Caco-2 (cell line): ENCODE measurements at regions of chr2 and their contacts with region 1.

Region 1: DNA sequence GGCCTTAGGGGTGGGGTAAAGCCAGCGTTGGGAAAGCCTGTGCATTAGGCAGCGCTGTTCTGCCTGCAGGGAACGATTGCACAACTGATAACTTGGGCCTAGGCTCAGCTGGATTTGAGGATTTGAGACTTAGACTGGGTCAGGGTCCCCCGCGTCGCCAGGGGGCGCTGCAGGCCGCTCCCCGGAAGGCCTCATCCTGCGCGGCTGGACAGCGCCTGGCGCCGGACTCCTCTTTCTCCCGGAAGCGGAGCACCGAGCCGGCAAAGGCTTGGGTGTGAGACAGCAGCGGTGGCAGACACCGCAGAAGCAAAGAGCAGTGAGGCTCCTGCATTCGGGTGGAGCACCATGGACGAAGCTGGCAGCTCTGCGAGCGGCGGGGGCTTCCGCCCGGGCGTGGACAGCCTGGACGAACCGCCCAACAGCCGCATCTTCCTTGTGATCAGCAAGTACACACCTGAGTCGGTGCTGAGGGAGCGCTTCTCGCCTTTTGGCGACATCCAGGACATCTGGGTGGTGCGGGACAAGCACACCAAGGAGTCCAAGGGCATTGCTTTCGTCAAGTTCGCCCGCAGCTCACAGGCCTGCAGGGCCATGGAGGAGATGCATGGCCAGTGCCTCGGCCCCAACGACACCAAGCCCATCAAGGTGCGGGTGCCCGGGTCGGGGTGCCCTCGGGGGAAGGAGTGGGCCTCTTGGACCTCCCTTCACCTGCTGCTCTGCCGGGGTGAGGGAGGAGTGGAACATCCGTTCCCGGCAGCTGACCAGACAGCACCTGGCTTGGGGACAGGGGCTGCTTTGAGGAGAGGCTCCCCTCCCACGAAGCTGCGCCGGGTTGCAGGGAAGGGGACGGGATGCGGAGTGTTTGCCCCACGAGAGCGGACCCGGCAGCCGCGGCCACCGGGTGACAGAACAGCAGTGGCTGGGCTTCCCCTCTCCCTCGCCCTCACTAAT is at the start of gene RBM45:
- DNase-seq: peak; percentile 92 to 95
- H3K4me3 ChIP-seq: peak within 1 kb of the TSS; percentile 98
- H3K4me3 Mint-ChIP-seq: peak within 1 kb of the TSS; percentile 94
- H3K27ac Mint-ChIP-seq: peak within 1 kb of the TSS; percentile 80
- H3K4me1 ChIP-seq: 0 out of 2 replicates have a peak, but pooled peaks cover 6% of the 10 kb centered on the region
- H3K4me1 Mint-ChIP-seq: peaks cover 6% of the 10 kb centered on the region
- H3K27me3 ChIP-seq: no peaks in the 10 kb centered on the region
- H3K27me3 Mint-ChIP-seq: no peaks in the 10 kb centered on the region
- CTCF ChIP-seq: peak; percentile 96 to 99
- total RNA-seq, gene RBM45: 13.4 and 13.6 TPM in 2 replicates

Region 2: DNA sequence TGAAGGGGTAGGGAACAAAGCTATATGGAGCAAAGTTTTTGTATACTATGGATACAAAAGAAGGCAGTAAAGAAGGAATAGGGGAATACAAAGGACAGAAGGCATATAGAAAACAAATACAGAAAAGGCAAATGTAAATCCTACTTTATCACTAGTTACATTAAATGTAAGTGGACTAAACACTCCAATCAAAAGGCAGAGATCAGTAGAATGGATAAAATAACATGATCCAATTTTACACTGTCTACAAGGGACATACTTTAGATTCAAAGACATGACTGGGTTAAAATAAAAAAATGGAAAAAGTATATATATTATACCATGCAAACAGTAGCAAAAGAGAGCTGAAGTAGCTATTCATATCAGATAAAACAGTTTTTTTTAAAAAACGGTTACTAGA is 254.9 kb before region 1 on chr2:
- CTCF ChIA-PET with region 1: no interaction called
- POLR2A ChIA-PET with region 1: no interaction called
- intact Hi-C with region 1: no loop called
- DNase-seq: no peak
- H3K4me3 ChIP-seq: no peak overlapping the region
- H3K4me3 Mint-ChIP-seq: no peak overlapping the region
- H3K27ac Mint-ChIP-seq: no peak overlapping the region
- H3K4me1 ChIP-seq: no peaks in the 10 kb centered on the region
- H3K4me1 Mint-ChIP-seq: peaks cover 2% of the 10 kb centered on the region
- H3K27me3 ChIP-seq: no peaks in the 10 kb centered on the region
- H3K27me3 Mint-ChIP-seq: no peaks in the 10 kb centered on the region
- CTCF ChIP-seq: no peak

Region 3: GRCh38 chr2:177983183-177983788 is 129.2 kb before region 1 on chr2:
- CTCF ChIA-PET with region 1: no interaction called
- POLR2A ChIA-PET with region 1: no interaction called
- intact Hi-C with region 1: loop called (anchors 5 kb)
- DNase-seq: peak; percentile 35 to 48
- H3K4me3 ChIP-seq: no peak overlapping the region
- H3K4me3 Mint-ChIP-seq: no peak overlapping the region
- H3K27ac Mint-ChIP-seq: no peak overlapping the region
- H3K4me1 ChIP-seq: no peaks in the 10 kb centered on the region
- H3K4me1 Mint-ChIP-seq: no peaks in the 10 kb centered on the region
- H3K27me3 ChIP-seq: no peaks in the 10 kb centered on the region; the same call in 1 of the 2 replicates
- H3K27me3 Mint-ChIP-seq: peaks cover 6% of the 10 kb centered on the region
- CTCF ChIP-seq: peak; percentile 79 to 86

Region 4: GRCh38 chr2:178072383-178073301 is 39.8 kb before region 1 on chr2 and contains the start of gene PDE11A:
- CTCF ChIA-PET with region 1: interaction called, 4 read pairs
- POLR2A ChIA-PET with region 1: no interaction called
- intact Hi-C with region 1: loop called (anchors 1 kb)
- DNase-seq: peak; percentile 89 to 94
- H3K4me3 ChIP-seq: peak within 1 kb of the TSS; percentile 48
- H3K4me3 Mint-ChIP-seq: peak within 1 kb of the TSS; percentile 87
- H3K27ac Mint-ChIP-seq: peak within 1 kb of the TSS; percentile 60
- H3K4me1 ChIP-seq: peaks cover 7% of the 10 kb centered on the region; the same call in 1 of the 2 replicates
- H3K4me1 Mint-ChIP-seq: peaks cover 23% of the 10 kb centered on the region
- H3K27me3 ChIP-seq: no peaks in the 10 kb centered on the region
- H3K27me3 Mint-ChIP-seq: peaks cover 16% of the 10 kb centered on the region
- CTCF ChIP-seq: no peak
- total RNA-seq, gene PDE11A: 0.21 and 0.25 TPM in 2 replicates

Region 5: GRCh38 chr2:178128836-178129630 is 16.6 kb after region 1 on chr2:
- CTCF ChIA-PET with region 1: no interaction called
- POLR2A ChIA-PET with region 1: no interaction called
- intact Hi-C with region 1: no loop called
- DNase-seq: no peak
- H3K4me3 ChIP-seq: no peak overlapping the region
- H3K4me3 Mint-ChIP-seq: no peak overlapping the region
- H3K27ac Mint-ChIP-seq: no peak overlapping the region
- H3K4me1 ChIP-seq: 0 out of 2 replicates have a peak, but pooled peaks cover 5% of the 10 kb centered on the region
- H3K4me1 Mint-ChIP-seq: peaks cover 9% of the 10 kb centered on the region
- H3K27me3 ChIP-seq: no peaks in the 10 kb centered on the region
- H3K27me3 Mint-ChIP-seq: no peaks in the 10 kb centered on the region
- CTCF ChIP-seq: no peak

Region 6: GRCh38 chr2:178193823-178194599 is 81.5 kb after region 1 on chr2 and contains the start of gene OSBPL6:
- CTCF ChIA-PET with region 1: interaction called, 6 read pairs
- POLR2A ChIA-PET with region 1: no interaction called
- intact Hi-C with region 1: loop called (anchors 5 kb)
- DNase-seq: peak; percentile 66 to 85
- H3K4me3 ChIP-seq: peak within 1 kb of the TSS; percentile 70
- H3K4me3 Mint-ChIP-seq: peak within 1 kb of the TSS; percentile 76
- H3K27ac Mint-ChIP-seq: no peak within 1 kb of the TSS
- H3K4me1 ChIP-seq: peaks cover 10% of the 10 kb centered on the region; the same call in 1 of the 2 replicates
- H3K4me1 Mint-ChIP-seq: no peaks in the 10 kb centered on the region
- H3K27me3 ChIP-seq: peaks cover 6% of the 10 kb centered on the region
- H3K27me3 Mint-ChIP-seq: peaks cover 22% of the 10 kb centered on the region
- CTCF ChIP-seq: no peak
- total RNA-seq, gene OSBPL6: 1.0 and 1.5 TPM in 2 replicates

Region 7: DNA sequence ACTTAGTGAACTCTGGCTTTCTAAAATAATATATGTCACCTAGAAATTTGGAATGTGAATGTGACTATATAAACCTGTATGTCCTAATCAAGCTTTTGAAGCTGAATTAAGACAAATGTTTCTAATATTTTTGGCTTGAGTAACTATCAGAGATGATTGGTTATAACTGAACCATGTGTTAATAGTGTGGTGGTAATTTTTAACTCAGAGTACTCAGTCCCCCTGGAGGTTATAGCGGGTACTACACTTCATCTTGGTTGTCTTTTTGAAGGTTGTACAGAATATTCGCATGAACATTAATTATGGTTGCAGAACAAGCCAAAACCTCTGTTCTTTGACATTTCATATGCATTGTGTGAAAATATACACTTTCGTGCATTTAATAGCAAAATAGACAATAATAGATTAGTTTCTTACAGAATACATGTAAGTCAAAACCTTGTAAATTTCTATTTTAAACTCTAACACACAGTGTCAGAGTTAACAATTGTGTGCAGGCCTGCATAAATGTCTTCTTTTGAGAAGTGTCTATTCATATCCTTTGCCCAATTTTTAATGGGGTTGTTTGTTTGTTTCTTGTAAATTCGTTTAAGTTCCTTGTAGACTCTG is 167.9 kb after region 1 on chr2:
- CTCF ChIA-PET with region 1: no interaction called
- POLR2A ChIA-PET with region 1: no interaction called
- intact Hi-C with region 1: no loop called
- DNase-seq: peak in 1 of 2 experiments; percentile 51
- H3K4me3 ChIP-seq: no peak overlapping the region
- H3K4me3 Mint-ChIP-seq: no peak overlapping the region
- H3K27ac Mint-ChIP-seq: no peak overlapping the region
- H3K4me1 ChIP-seq: peaks cover 40% of the 10 kb centered on the region
- H3K4me1 Mint-ChIP-seq: peaks cover 22% of the 10 kb centered on the region
- H3K27me3 ChIP-seq: no peaks in the 10 kb centered on the region
- H3K27me3 Mint-ChIP-seq: no peaks in the 10 kb centered on the region
- CTCF ChIP-seq: peak; percentile 46 to 56

Region 8: DNA sequence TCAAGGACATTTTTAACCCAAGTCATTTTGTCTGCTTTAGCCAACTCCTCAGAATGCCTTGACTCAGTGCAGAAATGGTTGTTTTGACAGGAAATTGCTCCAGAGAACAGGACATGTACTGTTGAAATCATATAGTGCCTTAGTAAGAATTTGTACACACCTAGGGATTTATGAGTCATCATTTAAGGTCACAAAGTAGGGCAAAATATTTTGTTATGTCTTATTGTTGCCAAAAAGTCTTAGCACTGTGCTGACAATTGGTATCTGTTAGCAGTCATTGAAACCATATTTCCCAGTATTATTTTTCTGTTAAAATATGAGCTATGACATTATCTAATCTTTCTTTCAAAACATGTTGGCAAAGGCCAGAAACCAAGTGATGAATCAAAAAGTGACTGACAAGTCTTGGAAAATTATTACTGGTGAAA is 186.3 kb after region 1 on chr2:
- CTCF ChIA-PET with region 1: no interaction called
- POLR2A ChIA-PET with region 1: no interaction called
- intact Hi-C with region 1: loop called (anchors 10 kb)
- DNase-seq: no peak
- H3K4me3 ChIP-seq: no peak overlapping the region
- H3K4me3 Mint-ChIP-seq: no peak overlapping the region
- H3K27ac Mint-ChIP-seq: no peak overlapping the region
- H3K4me1 ChIP-seq: peaks cover 32% of the 10 kb centered on the region
- H3K4me1 Mint-ChIP-seq: peaks cover 24% of the 10 kb centered on the region
- H3K27me3 ChIP-seq: no peaks in the 10 kb centered on the region
- H3K27me3 Mint-ChIP-seq: no peaks in the 10 kb centered on the region
- CTCF ChIP-seq: no peak

Region 9: GRCh38 chr2:178469219-178469849 is 356.9 kb after region 1 on chr2:
- CTCF ChIA-PET with region 1: no interaction called
- POLR2A ChIA-PET with region 1: no interaction called
- intact Hi-C with region 1: no loop called
- DNase-seq: no peak
- H3K4me3 ChIP-seq: no peak overlapping the region
- H3K4me3 Mint-ChIP-seq: no peak overlapping the region
- H3K27ac Mint-ChIP-seq: no peak overlapping the region
- H3K4me1 ChIP-seq: no peaks in the 10 kb centered on the region
- H3K4me1 Mint-ChIP-seq: no peaks in the 10 kb centered on the region
- H3K27me3 ChIP-seq: no peaks in the 10 kb centered on the region
- H3K27me3 Mint-ChIP-seq: no peaks in the 10 kb centered on the region
- CTCF ChIP-seq: no peak

Region 10: GRCh38 chr2:178480227-178481181 is 368.0 kb after region 1 on chr2 and contains the start of gene PLEKHA3:
- CTCF ChIA-PET with region 1: no interaction called
- POLR2A ChIA-PET with region 1: no interaction called
- intact Hi-C with region 1: loop called (anchors 2 kb)
- DNase-seq: peak; percentile 94 to 95
- H3K4me3 ChIP-seq: peak within 1 kb of the TSS; percentile 60
- H3K4me3 Mint-ChIP-seq: peak within 1 kb of the TSS; percentile 99
- H3K27ac Mint-ChIP-seq: peak within 1 kb of the TSS; percentile 96
- H3K4me1 ChIP-seq: peaks cover 7% of the 10 kb centered on the region; the same call in 1 of the 2 replicates
- H3K4me1 Mint-ChIP-seq: peaks cover 5% of the 10 kb centered on the region
- H3K27me3 ChIP-seq: no peaks in the 10 kb centered on the region
- H3K27me3 Mint-ChIP-seq: no peaks in the 10 kb centered on the region
- CTCF ChIP-seq: no peak
- total RNA-seq, gene PLEKHA3: 16.9 and 18.5 TPM in 2 replicates